ENCODE measurements at regions of chr9 and their contacts with region 1.

Region 1: GRCh38 chr9:97615439-97616072 is 17.6 kb downstream of the TSTD2 start:
- DNase-seq: peak; percentile 64 to 91 (median 75)
- H3K4me3 ChIP-seq: no peak overlapping the region
- H3K27ac ChIP-seq: no peak overlapping the region
- H3K4me1 ChIP-seq: peaks cover 0 to 7% of the 10 kb centered on the region in 2 donors
- H3K27me3 ChIP-seq: no peaks in the 10 kb centered on the region
- CTCF ChIP-seq: peak; percentile 83 to 93 (median 90)
- POLR2A ChIP-seq: no peak

Region 2: GRCh38 chr9:97406620-97407177 is 208.9 kb before region 1 on chr9:
- intact Hi-C with region 1: loop called (anchors 5 to 10 kb)
- DNase-seq: no peak
- H3K4me3 ChIP-seq: no peak overlapping the region
- H3K27ac ChIP-seq: no peak overlapping the region
- H3K4me1 ChIP-seq: peaks cover 0 to 4% of the 10 kb centered on the region in 2 donors
- H3K27me3 ChIP-seq: no peaks in the 10 kb centered on the region
- CTCF ChIP-seq: no peak
- POLR2A ChIP-seq: no peak

Region 3: GRCh38 chr9:97411789-97412625 is 203.5 kb before region 1 on chr9 and contains the start of gene TDRD7:
- intact Hi-C with region 1: loop called (anchors 5 to 10 kb)
- DNase-seq: peak; percentile 82 to 92 (median 89)
- H3K4me3 ChIP-seq: peak within 1 kb of the TSS; percentile 0 to 99 (median 76)
- H3K27ac ChIP-seq: peak within 1 kb of the TSS in 4 of 5 donors; percentile 44 to 94 (median 80)
- H3K4me1 ChIP-seq: peaks cover 0 to 16% of the 10 kb centered on the region in 2 donors
- H3K27me3 ChIP-seq: no peaks in the 10 kb centered on the region
- CTCF ChIP-seq: peak; percentile 85 to 100 (median 94)
- POLR2A ChIP-seq: peak; percentile 27 to 34
- total RNA-seq, gene TDRD7: 8.4 to 11.6 (median 9.3) TPM

Region 4: DNA sequence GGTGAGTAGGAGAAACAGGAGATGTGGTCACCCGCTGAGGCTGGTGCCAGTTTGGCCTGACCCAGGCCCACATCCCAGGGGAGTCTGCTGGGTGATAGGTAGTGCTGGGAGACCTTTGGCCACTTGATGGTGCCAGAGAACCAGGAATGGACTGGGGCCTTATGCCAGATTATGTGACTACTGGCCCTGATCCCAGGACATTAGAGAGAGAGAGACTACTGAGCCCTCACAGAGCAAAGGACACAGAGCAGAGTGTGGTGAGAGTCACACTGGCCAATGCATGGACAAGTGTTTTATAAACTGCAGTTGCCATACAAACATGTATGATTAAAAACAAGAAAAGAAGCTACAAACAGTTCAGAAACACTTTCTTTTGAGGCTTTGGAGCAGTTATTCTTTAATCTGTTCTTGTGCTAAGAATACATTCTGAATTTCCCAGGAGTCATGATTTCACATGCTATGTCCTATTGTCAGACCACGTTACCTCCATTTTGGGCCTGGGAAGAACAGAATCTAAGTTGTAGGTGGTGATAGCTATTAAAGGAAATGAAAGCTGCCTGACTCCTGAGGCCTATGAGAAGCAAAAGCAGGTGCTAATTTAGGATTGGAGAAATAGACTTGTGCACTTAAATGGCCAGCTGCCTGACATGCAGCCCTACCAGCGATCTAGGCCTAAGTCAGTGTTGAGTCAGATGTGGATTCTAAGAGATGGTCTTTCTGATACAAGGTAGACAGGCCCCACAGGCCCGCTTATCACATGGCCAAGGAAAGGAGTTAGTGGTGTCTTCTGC is 146.7 kb before region 1 on chr9:
- intact Hi-C with region 1: loop called (anchors 2 to 5 kb)
- DNase-seq: peak; percentile 80 to 95 (median 85)
- H3K4me3 ChIP-seq: no peak overlapping the region
- H3K27ac ChIP-seq: peak overlapping the region in 3 of 5 donors; percentile 14 to 53 (median 21)
- H3K4me1 ChIP-seq: peaks cover 0 to 6% of the 10 kb centered on the region in 2 donors
- H3K27me3 ChIP-seq: no peaks in the 10 kb centered on the region
- CTCF ChIP-seq: peak; percentile 55 to 98 (median 95)
- POLR2A ChIP-seq: no peak